Mucosa of descending colon (tissue), 3 donors: ENCODE measurements at regions of chr20 and their contacts with region 1.

Region 1: DNA sequence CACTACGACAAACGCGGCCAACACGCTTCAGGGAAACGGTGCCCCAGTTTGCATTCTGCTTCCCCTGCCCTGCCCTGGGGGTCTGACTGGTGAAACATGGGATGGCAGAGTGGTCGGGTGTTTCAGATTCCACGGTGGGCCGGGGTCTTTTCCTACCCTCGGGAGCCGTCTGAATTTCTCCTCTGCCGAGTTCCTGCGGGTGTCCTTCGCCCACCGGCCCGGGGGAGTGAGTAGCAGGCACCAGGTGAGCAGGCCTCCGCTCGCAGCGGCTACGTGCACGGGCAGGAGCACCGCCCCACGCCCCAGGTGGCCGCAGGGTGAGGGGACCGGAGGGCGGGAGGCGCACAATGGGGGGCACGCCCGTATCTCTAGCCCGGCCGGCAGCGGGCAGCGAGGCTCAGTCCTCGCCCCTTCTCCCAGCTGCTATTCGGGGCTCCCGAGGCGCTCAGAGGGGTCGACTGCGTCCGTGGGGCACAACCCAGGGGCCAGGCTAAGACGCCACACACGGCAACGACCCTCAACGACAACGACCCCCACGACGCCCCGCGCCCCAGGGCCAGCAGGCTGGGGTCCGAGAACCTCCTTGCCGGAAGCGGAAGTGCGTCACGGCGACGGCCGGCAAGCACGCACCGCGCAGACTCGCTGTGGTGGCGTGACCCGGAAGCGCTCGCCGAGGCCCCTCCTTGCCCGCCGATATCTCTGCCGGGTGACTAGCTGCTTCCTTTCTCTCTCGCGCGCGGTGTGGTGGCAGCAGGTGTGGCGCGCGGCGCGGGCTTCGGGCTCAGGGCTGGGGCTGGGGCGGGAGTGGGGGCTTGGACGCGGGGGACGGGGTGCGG is at the start of gene RPS21:
- DNase-seq: peak; percentile 94 to 97 (median 96)
- ATAC-seq: peak; percentile 95
- H3K4me3 ChIP-seq: peak within 1 kb of the TSS; percentile 98
- H3K4me1 ChIP-seq: peaks cover 26% of the 10 kb centered on the region
- CTCF ChIP-seq: no peak
- total RNA-seq, gene RPS21: 1,171 to 1,284 (median 1,191) TPM

Region 2: DNA sequence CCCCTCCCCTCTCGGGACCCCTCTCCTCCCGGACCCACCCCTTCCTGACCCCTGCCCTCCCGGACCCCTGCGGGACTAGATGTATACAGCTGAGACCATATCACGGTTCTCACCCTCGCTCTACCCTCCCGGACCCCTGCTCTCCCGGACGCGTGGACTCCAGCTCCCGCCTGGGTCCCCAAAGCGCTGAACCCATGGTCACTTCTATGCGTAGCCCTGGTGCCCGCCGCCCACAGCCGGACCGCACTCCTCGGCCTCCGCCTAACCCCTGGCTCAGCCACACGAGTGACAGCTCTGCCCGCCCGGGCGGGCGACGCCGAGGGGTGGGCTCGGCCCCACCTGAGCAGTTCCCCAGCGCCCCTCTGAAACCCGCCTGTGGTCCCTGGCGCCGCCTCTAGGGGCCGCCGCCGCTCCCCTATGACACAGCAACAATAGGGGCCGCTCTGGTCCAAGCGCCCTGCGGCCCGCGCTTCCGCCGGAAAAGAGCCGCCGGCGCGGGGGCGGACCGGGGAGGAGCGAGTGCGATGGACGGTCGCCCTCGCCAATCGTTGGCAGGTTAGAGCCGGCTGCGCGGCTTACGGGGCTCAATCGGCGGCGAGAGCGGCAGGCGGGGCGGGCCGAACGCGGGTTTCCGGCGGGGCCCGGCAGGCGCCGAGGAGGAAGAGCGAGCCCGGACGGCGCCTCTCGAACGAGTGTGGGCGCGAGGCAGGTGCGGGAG is 84.1 kb before region 1 on chr20 and contains the start of gene ADRM1:
- intact Hi-C with region 1: loop called (anchors 5 kb)
- DNase-seq: peak; percentile 95 to 98 (median 97)
- ATAC-seq: peak; percentile 91
- H3K4me3 ChIP-seq: peak within 1 kb of the TSS; percentile 94
- H3K4me1 ChIP-seq: peaks cover 18% of the 10 kb centered on the region
- CTCF ChIP-seq: peak; percentile 94
- total RNA-seq, gene ADRM1: 54.4 to 85.8 (median 77.6) TPM

Region 3: DNA sequence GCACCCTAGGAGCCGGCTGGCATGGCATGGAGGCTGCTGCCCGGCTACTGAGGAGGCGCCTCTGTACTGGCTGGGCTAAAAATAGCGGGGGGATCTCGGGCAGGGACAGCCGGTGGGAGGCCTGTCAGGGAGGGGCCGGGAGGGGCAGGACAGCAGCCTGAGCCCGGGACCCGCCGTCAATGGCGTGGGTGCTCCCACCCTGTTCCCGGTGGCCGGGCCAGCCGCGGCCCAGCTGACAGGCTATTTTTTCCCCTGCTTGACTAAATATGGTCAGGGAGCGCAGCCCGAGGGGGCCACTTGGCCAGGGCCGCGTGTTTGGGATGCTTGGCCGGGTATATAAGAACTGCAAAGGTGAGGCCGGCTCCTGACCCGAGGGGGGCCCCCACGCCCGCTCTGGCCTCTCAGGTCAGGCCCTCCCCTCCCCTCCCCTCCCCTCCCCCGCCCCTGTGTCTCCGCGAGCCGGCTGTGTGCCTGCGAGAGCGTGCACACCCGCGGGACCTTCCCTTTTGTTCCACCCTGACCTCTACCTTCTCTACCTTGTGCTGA is 163.6 kb after region 1 on chr20:
- intact Hi-C with region 1: no loop called
- DNase-seq: peak in 1 of 3 donors; percentile 12
- ATAC-seq: peak; percentile 9
- H3K4me3 ChIP-seq: no peak overlapping the region
- H3K4me1 ChIP-seq: no peaks in the 10 kb centered on the region
- CTCF ChIP-seq: no peak